Aorta (tissue), 5 donors: ENCODE measurements at regions of chr7 and their contacts with region 1.

Region 1: DNA sequence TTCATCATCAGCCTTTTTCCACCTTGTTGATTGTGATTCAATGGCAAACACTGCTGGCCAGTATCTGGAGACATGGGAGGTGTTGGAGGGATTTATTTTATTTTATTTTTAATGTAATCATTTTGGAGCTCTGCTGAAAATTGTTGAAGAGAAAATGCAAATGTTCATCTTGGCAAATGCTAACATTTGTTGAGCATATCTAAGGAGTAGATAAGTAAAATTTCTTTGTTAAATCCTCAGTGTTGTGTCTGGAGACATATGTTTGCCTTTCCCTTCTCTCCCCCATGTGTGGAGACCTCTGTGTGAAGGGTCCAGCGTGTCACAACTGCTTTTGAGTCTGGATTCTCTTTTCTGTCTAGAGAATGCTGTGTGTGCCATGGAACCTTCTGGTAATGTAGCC is 300.3 kb downstream of the FZD1 start:
- DNase-seq: no peak
- ATAC-seq: no peak
- H3K4me3 ChIP-seq: no peak overlapping the region
- H3K27ac ChIP-seq: no peak overlapping the region
- H3K4me1 ChIP-seq: no peaks in the 10 kb centered on the region
- H3K27me3 ChIP-seq: no peaks in the 10 kb centered on the region

Region 2: DNA sequence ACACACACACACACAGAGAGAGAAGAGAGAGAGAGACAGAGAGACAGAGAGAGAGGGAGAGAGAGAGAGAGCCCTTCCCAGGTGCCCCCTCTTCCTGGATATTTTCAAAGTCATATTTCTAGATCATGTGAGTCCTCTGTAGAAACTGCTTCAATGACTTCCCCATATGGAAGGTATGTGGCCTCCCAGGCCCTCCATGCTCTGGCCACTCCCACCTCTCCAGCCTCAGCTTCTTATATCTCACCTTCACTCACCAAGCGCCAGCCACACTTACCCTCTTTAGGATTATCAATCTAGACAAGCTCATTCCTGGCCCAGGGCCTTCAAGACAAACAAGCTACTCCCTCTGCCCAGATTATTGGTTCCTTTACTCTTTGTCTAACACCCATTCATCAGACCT is 56.3 kb after region 1 on chr7:
- intact Hi-C with region 1: loop called in 1 of 2 experiments (anchors 5 kb)
- DNase-seq: no peak
- ATAC-seq: no peak
- H3K4me3 ChIP-seq: no peak overlapping the region
- H3K27ac ChIP-seq: no peak overlapping the region
- H3K4me1 ChIP-seq: no peaks in the 10 kb centered on the region
- H3K27me3 ChIP-seq: no peaks in the 10 kb centered on the region

Region 3: GRCh38 chr7:92695308-92696261 is 1131.0 kb after region 1 on chr7:
- intact Hi-C with region 1: no loop called
- DNase-seq: no peak
- ATAC-seq: peak; percentile 66
- H3K4me3 ChIP-seq: peak overlapping the region; percentile 75 to 77
- H3K27ac ChIP-seq: peak overlapping the region in 1 of 2 donors; percentile 21
- H3K4me1 ChIP-seq: peaks cover 5 to 6% of the 10 kb centered on the region in 2 donors
- H3K27me3 ChIP-seq: peaks cover 0 to 2% of the 10 kb centered on the region in 2 donors